Activated T-helper 2 cell treated with anti-CD3 and anti-CD28 coated beads, Interferon-gamma antibody, Interleukin-2, Interleukin-4, amounts not matched to agents 10 μg/mL and 5 μg/mL and 100 μg/mL, durations not matched to agents 14 hours and 24 hours and 36 hours (primary cell): ENCODE measurements at regions of chr16 and their contacts with region 1.

Region 1: DNA sequence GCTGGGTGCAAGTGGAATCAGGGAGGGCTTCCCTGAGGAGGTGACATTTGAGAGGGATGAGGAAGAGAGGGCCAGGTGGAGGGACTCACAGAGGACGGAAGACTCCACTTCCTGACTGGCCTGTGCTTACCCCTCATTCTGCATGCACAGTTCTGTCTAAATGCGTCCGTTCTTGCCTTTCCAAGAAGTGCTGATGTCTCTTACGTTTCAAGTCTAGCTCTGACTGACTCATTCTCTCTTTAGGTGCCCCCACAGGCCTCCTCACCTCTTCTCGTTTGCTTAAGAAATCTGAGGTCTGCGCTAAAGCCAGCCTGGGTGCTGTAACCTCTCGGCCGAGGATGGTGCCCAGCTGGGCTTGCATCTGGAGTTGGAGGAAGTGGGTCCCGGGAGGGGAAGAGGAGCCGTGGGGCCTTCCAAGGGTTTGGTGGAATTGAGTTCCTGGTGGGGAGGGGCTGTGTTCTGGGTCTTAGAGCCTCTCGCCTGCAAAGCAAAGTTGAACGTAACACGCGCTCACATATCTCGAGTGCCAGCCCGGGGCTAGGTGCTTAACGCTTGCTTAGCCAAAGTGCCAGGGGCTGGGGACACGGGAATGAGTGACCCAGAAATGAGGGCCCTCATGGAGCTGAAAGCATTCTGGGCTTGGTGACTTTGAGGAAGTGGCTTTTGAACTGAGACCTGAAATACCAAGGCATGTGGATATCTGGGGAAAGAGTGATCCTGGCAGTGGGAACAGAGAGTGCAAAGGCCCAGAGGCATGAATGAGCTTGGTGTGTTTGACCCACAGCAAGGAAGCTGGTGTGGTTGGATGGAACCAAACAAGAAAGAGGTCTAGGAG is 4.8 kb downstream of the IL4R start:
- DNase-seq: peak; percentile 54
- H3K4me3 Mint-ChIP-seq: peak overlapping the region; percentile 100
- H3K27ac Mint-ChIP-seq: peak overlapping the region; percentile 98
- H3K4me1 Mint-ChIP-seq: peaks cover 60% of the 10 kb centered on the region
- H3K27me3 Mint-ChIP-seq: no peaks in the 10 kb centered on the region

Region 2: DNA sequence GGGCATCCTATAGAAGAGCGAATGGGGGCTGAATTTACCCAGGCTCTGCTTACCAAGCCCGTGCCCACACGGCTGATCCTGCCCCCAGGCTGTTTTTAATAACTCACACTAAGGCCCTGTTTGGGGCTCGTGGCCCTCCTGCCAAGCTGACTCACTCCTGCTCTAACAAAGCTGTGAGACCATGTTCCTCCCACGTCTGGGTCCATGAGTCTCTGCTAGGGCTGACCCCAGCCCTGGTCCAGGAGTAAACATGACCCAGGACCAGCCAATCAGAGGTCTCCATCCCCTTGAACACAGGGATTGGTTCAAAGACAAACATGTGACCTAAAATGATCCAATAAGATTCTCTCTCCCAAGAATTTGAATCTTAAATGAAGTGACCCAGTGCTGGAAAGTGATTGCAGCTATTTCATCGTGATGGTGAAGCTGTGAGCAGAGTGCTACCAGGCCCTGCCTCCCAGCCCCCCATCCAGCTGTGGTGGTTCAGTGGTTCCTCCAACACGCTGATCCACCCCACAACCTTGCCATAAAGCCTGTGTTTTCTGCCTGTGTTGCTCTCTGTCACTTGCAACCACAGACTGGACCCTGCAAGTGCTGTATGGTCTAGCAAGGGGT is 194.7 kb before region 1 on chr16:
- intact Hi-C with region 1: no loop called
- DNase-seq: no peak
- H3K4me3 Mint-ChIP-seq: no peak overlapping the region
- H3K27ac Mint-ChIP-seq: no peak overlapping the region
- H3K4me1 Mint-ChIP-seq: no peaks in the 10 kb centered on the region
- H3K27me3 Mint-ChIP-seq: peaks cover 10% of the 10 kb centered on the region

Region 3: DNA sequence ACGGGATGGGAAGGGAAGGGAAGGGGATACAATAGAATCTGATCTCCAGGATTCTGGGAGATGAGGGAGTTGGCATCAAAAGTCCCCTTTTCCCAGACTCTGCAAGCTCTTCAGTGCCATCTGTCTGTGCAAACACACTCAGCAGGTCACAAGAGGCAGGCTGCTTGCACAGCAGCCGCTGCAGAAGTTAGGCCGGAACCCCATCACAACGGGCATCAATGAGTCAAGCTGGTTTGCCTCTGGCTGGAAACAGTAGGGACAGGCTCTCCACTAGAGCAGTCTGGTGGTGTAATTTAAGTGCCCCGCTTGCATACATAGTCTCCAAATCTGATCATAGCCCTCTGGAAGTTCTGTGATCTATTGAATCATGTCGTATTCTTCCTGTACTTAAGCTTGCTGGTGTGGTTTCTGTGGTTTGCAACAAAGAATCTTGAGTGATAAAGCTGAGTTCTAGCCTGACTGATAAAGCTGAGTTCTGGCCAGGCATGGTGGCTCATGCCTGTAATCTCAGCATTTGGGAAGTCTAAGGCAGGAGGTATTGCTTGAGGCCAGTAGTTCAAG is 149.0 kb before region 1 on chr16:
- intact Hi-C with region 1: loop called (anchors 1 kb)
- DNase-seq: peak; percentile 67
- H3K4me3 Mint-ChIP-seq: peak overlapping the region; percentile 39
- H3K27ac Mint-ChIP-seq: peak overlapping the region; percentile 82
- H3K4me1 Mint-ChIP-seq: peaks cover 46% of the 10 kb centered on the region
- H3K27me3 Mint-ChIP-seq: no peaks in the 10 kb centered on the region

Region 4: GRCh38 chr16:27253526-27253930 is 65.1 kb before region 1 on chr16:
- intact Hi-C with region 1: loop called (anchors 1 kb)
- DNase-seq: no peak
- H3K4me3 Mint-ChIP-seq: peak overlapping the region; percentile 54
- H3K27ac Mint-ChIP-seq: peak overlapping the region; percentile 97
- H3K4me1 Mint-ChIP-seq: peaks cover 82% of the 10 kb centered on the region
- H3K27me3 Mint-ChIP-seq: no peaks in the 10 kb centered on the region

Region 5: DNA sequence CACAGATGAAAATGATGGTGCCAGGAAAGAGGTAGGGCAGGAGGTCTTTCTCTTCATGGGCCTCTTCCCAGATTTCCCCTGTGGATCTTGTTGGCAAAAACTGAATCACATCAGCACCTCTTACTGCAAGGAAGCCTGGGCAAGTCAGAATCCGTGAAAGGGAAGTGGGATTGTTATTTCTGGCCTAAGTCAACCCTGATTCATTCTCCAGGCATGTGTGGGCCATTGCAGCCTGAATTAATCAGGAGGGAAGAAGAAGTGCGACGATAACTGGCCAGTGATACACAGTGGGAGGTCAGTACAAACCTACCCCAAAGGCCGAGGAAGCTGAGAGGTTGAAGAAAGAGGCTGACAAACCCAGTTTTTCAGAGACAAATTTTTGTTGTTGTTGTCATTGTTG is 32.2 kb before region 1 on chr16:
- intact Hi-C with region 1: loop called (anchors 2 kb)
- DNase-seq: no peak
- H3K4me3 Mint-ChIP-seq: no peak overlapping the region
- H3K27ac Mint-ChIP-seq: peak overlapping the region; percentile 93
- H3K4me1 Mint-ChIP-seq: peaks cover 79% of the 10 kb centered on the region
- H3K27me3 Mint-ChIP-seq: no peaks in the 10 kb centered on the region

Region 6: GRCh38 chr16:27301236-27301861 is 17.3 kb before region 1 on chr16:
- intact Hi-C with region 1: loop called (anchors 1 kb)
- DNase-seq: no peak
- H3K4me3 Mint-ChIP-seq: no peak overlapping the region
- H3K27ac Mint-ChIP-seq: no peak overlapping the region
- H3K4me1 Mint-ChIP-seq: peaks cover 43% of the 10 kb centered on the region
- H3K27me3 Mint-ChIP-seq: no peaks in the 10 kb centered on the region

Region 7: DNA sequence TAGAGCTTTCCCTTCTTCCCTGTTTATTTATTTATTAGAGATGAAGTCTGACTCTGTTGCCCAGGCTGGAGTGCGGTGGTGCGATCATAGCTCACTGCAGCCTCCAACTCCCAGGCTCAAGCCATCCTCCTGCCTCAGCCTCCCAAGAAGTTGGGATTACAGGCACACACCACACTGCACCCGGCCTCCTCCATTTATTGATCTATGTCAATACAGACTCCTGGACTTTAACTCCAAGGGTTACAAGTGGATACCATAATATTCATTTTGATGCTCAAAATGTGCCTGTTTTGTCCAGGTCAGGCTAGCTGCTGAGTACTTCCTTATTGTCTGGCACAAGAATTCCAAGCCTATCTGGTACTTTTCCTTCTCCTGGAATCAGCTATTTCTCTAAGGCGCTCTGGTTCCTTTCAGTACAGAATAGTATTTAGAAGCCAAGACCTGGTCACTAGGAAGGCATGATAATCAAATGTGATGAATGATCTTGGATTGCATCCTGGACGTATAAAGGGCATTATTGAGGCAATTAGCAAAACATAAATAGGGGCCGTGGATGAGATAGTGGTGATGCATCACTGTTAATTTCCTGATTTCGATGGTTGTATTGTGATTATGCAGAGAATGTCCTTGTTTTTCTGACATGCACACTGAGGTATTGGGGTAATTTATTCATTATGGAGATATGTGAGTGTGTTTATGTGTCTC is 16.9 kb after region 1 on chr16:
- intact Hi-C with region 1: no loop called
- DNase-seq: no peak
- H3K4me3 Mint-ChIP-seq: no peak overlapping the region
- H3K27ac Mint-ChIP-seq: peak overlapping the region; percentile 52
- H3K4me1 Mint-ChIP-seq: peaks cover 57% of the 10 kb centered on the region
- H3K27me3 Mint-ChIP-seq: no peaks in the 10 kb centered on the region

Region 8: DNA sequence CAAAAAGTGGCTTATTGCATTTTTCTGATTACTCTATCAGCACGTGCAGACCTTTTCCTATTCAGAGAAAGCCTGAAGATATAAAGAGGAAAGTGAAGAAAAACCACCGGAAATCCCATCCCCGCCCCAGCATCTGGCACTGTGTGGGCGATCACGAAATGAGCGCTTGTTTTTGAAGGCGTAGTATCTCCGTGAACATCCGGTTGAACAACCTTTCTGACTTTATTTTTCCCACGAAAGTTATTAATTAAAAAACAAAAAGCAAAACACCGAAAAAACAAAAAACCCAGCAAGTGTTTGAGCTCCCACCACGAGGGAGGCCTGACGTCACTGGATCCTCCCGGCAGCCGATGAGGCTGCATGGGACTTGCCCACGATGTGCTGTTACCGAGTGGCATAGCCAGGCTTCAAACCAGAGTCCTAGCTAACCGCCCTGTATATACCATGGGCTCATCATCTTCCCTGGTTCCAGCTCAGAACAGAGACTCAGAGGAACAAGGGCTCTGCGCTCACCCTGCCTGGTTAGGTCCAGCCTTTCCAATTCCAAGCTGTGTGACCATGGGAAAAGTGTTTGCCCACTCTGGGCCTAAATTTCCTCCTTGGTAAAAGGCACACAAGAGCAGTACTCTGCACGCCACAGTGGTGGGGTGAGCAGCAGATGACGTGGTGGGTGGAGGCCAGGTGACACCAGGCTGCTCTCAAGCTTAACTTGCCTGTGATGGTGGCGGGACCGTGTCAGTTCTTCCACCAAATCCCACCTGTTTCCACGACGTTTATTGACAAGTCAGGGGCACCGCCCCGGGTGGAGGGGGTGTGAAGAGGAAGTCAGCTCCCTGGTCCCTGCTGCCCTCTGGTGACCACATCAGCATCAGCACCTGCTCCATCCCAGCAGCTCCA is 49.1 kb after region 1 on chr16:
- intact Hi-C with region 1: loop called (anchors 1 kb)
- DNase-seq: peak; percentile 81
- H3K4me3 Mint-ChIP-seq: peak overlapping the region; percentile 53
- H3K27ac Mint-ChIP-seq: peak overlapping the region; percentile 99
- H3K4me1 Mint-ChIP-seq: peaks cover 65% of the 10 kb centered on the region
- H3K27me3 Mint-ChIP-seq: no peaks in the 10 kb centered on the region

Region 9: GRCh38 chr16:27408012-27408601 is 89.5 kb after region 1 on chr16:
- intact Hi-C with region 1: loop called (anchors 1 kb)
- DNase-seq: no peak
- H3K4me3 Mint-ChIP-seq: peak overlapping the region; percentile 99
- H3K27ac Mint-ChIP-seq: peak overlapping the region; percentile 96
- H3K4me1 Mint-ChIP-seq: peaks cover 57% of the 10 kb centered on the region
- H3K27me3 Mint-ChIP-seq: no peaks in the 10 kb centered on the region